ENCODE measurements at regions of chr3 and their contacts with region 1.

Region 1: DNA sequence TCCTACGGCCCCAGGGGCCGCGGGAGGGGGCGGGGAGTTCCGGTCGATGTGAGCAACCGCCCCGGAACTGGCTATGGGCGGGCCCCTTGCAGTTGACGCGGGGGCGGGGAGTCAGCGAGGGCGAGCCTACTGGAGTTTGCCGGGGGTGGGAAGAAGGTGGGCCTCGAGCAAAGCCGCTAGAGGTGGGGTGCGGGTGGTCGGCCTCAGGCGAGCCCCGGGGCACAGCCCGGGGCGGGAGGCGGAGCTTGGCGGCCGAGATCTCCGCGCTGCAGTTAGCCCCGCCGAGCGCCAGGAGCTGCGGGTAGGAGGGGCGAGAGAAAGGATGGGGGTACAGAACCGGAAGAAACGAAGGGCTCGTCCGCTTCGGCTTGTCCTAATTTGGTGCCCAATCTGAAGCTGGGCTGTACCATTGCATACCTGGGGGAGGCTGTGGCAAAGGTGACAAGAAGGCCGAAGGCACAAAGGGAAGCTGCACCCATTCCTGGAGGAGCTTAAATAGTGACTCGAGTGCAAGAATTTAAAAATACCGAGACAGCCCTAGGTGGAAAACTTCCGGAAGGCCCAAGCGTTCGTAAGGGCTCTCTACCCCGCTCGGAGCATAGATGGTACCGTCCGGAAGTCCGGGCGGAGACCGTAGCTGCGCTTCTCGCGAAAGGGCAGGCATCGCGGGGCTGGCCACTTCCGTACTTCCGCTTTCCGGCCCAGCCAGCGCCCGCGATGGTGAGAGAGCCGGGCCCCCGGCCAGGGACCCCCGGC is at the starts of genes ARPC4 and TADA3:
- DNase-seq: peak; percentile 93
- H3K4me3 Mint-ChIP-seq: peak within 1 kb of the TSS; percentile 97
- H3K27ac Mint-ChIP-seq: peak within 1 kb of the TSS; percentile 99
- H3K4me1 Mint-ChIP-seq: peaks cover 63% of the 10 kb centered on the region
- H3K27me3 Mint-ChIP-seq: no peaks in the 10 kb centered on the region
- total RNA-seq, gene ARPC4: 255 to 266 TPM
- total RNA-seq, gene TADA3: 88.1 to 88.3 TPM

Region 2: GRCh38 chr3:9769426-9770275 is 22.9 kb before region 1 on chr3 and contains the start of gene CAMK1:
- CTCF ChIA-PET with region 1: interaction called, 3 read pairs
- POLR2A ChIA-PET with region 1: interaction called, 25 read pairs
- DNase-seq: peak; percentile 77
- H3K4me3 Mint-ChIP-seq: peak within 1 kb of the TSS; percentile 71
- H3K27ac Mint-ChIP-seq: peak within 1 kb of the TSS; percentile 54
- H3K4me1 Mint-ChIP-seq: peaks cover 40% of the 10 kb centered on the region
- H3K27me3 Mint-ChIP-seq: no peaks in the 10 kb centered on the region
- total RNA-seq, gene CAMK1: 18.5 to 20.2 TPM

Region 3: GRCh38 chr3:9779721-9780457 is 12.7 kb before region 1 on chr3:
- CTCF ChIA-PET with region 1: interaction called, 5 read pairs
- POLR2A ChIA-PET with region 1: interaction called, 56 read pairs
- DNase-seq: peak; percentile 61
- H3K4me3 Mint-ChIP-seq: peak overlapping the region; percentile 21
- H3K27ac Mint-ChIP-seq: peak overlapping the region; percentile 92
- H3K4me1 Mint-ChIP-seq: peaks cover 54% of the 10 kb centered on the region
- H3K27me3 Mint-ChIP-seq: no peaks in the 10 kb centered on the region

Region 4: GRCh38 chr3:9809615-9810432 is 17.2 kb after region 1 on chr3 and contains the start of gene TTLL3:
- CTCF ChIA-PET with region 1: interaction called, 20 read pairs
- POLR2A ChIA-PET with region 1: interaction called, 137 read pairs
- DNase-seq: peak; percentile 54
- H3K4me3 Mint-ChIP-seq: peak within 1 kb of the TSS; percentile 86
- H3K27ac Mint-ChIP-seq: peak within 1 kb of the TSS; percentile 93
- H3K4me1 Mint-ChIP-seq: peaks cover 51% of the 10 kb centered on the region
- H3K27me3 Mint-ChIP-seq: no peaks in the 10 kb centered on the region
- total RNA-seq, gene TTLL3: 50.8 to 59.0 TPM

Region 5: GRCh38 chr3:9825451-9826040 is 33.0 kb after region 1 on chr3:
- CTCF ChIA-PET with region 1: no interaction called
- POLR2A ChIA-PET with region 1: no interaction called
- DNase-seq: no peak
- H3K4me3 Mint-ChIP-seq: no peak overlapping the region
- H3K27ac Mint-ChIP-seq: no peak overlapping the region
- H3K4me1 Mint-ChIP-seq: peaks cover 3% of the 10 kb centered on the region
- H3K27me3 Mint-ChIP-seq: no peaks in the 10 kb centered on the region

Region 6: DNA sequence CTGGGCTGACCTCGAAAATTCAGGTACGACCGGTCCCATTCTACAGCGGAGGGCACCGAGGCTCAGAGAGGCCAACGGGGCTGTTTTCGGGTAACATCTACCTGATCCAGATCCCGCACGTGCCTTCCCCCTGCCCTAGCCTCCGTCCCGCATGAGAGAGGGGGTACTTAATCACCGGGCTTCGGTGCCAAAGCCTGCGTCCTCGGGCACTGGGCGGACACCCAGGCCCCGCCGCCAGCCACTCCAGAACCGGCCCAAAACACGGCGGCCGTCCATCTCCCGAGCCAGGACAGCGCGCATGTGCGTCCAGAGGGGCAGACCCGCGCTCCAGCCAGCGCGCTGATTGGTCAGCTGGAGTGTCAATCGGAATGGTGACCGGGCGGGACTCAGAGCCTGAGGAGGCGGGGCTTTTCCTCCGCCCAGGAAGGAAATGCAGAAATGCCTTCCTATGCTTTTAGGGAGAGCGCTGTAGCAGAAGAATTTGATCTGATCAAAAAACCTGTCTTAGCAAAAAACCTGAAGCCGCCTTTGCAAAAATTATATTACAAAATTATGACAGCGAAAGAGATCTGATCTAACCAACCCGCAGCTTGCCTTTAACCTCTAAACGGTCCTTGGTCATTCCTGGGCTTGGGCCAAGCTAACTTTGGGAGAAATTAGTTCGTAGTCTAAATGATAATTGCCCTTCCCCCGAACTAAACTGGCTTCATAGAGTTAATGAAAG is 51.3 kb after region 1 on chr3 and contains the start of gene RPUSD3:
- CTCF ChIA-PET with region 1: no interaction called
- POLR2A ChIA-PET with region 1: interaction called, 11 read pairs
- DNase-seq: peak; percentile 97
- H3K4me3 Mint-ChIP-seq: peak within 1 kb of the TSS; percentile 99
- H3K27ac Mint-ChIP-seq: peak within 1 kb of the TSS; percentile 83
- H3K4me1 Mint-ChIP-seq: peaks cover 27% of the 10 kb centered on the region
- H3K27me3 Mint-ChIP-seq: no peaks in the 10 kb centered on the region
- total RNA-seq, gene RPUSD3: 51.5 to 53.6 TPM

Region 7: GRCh38 chr3:9890249-9891071 is 97.9 kb after region 1 on chr3 and contains the start of gene JAGN1:
- CTCF ChIA-PET with region 1: no interaction called
- POLR2A ChIA-PET with region 1: interaction called, 10 read pairs
- DNase-seq: peak; percentile 92
- H3K4me3 Mint-ChIP-seq: peak within 1 kb of the TSS; percentile 99
- H3K27ac Mint-ChIP-seq: peak within 1 kb of the TSS; percentile 92
- H3K4me1 Mint-ChIP-seq: peaks cover 36% of the 10 kb centered on the region
- H3K27me3 Mint-ChIP-seq: no peaks in the 10 kb centered on the region
- total RNA-seq, gene JAGN1: 25.4 to 28.6 TPM

Measured in activated CD4-positive, alpha-beta memory T cell treated with anti-CD3 and anti-CD28 coated beads, Interleukin-2, amount 10 ng/mL, durations not matched to agents 7 days and 5 days (primary cell).